ENCODE measurements at regions of chr22 and their contacts with region 1.

Region 1: GRCh38 chr22:24208012-24208749 is 26.9 kb downstream of the SUSD2 start:
- DNase-seq: no peak

Region 2: GRCh38 chr22:24037851-24038765 is 170.1 kb before region 1 on chr22:
- intact Hi-C with region 1: no loop called
- DNase-seq: no peak

Region 3: DNA sequence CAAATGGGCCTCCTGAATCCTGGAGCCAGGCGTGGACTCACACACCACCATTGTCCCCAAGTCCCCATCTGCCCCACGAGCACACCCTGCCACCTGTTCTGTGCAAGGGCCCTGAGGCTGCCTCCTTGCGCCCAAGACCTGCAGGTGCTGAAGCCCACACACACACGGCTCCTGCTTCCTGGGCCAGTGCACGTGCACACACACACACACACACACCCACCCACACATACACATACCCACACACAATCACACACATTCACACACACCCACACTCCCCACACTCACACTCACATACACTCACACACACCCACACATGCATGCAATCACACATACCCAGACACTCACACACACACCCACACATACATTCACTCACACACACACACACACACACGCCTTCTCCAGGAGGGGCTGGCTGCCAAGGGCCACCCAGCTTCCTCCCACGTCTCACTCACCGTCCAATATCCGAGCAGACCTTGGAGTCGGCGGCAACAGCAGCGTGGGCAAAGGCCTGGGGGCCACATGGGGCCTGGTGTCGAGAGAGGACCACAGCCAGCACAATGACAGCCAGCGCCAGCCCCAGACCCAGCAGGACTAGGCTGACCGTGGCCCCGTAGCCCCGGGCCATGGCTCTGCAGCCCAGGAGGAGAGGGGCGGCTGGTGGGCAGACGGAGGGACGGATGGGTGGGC is 36.1 kb after region 1 on chr22:
- intact Hi-C with region 1: loop called in 1 of 2 experiments (anchors 5 kb)
- DNase-seq: no peak